RWPE1 (cell line): ENCODE measurements at regions of chr16 and their contacts with region 1.

Region 1: GRCh38 chr16:19173649-19174383 is 5.8 kb downstream of the SYT17 start:
- DNase-seq: no peak
- H3K27ac ChIP-seq: no peak overlapping the region
- CTCF ChIP-seq: no peak

Region 2: GRCh38 chr16:19138601-19139000 is 35.2 kb before region 1 on chr16:
- CTCF ChIA-PET with region 1: no interaction called
- POLR2A ChIA-PET with region 1: interaction called, 10 read pairs
- DNase-seq: peak; percentile 89
- H3K27ac ChIP-seq: peak overlapping the region; percentile 98
- CTCF ChIP-seq: no peak

Region 3: DNA sequence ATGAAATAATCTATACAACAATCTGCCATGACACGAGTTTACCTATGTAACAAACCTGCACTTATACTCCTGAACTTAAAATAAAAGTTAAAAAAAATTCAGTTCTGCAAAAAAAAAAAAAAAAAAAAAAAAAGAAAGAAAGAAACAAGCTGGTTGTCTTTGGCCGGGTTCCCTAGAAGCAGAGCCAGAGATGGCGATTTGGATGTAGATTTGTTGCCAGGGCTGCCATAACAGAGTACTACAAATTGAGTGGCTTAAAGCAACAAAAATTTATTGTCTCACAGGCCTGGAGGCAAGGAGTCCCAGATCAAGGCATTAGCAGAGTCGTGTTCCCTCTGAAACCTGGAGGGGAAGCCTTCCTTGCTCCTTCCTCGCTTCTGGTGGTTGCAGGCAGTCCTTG is 14.6 kb after region 1 on chr16:
- CTCF ChIA-PET with region 1: no interaction called
- POLR2A ChIA-PET with region 1: no interaction called
- DNase-seq: no peak
- H3K27ac ChIP-seq: no peak overlapping the region
- CTCF ChIP-seq: no peak